Stomach (tissue), 19 donors: ENCODE measurements at regions of chr1 and their contacts with region 1.

Region 1: GRCh38 chr1:202132031-202132907 is 9.6 kb downstream of the GPR37L1 start:
- DNase-seq: peak; percentile 46 to 76
- H3K4me3 ChIP-seq: no peak overlapping the region
- H3K27ac ChIP-seq: peak overlapping the region; percentile 63 to 83 (median 76)
- H3K4me1 ChIP-seq: peaks cover 19 to 55% (median 33%) of the 10 kb centered on the region in 4 donors
- H3K27me3 ChIP-seq: no peaks in the 10 kb centered on the region
- CTCF ChIP-seq: no peak
- EP300 ChIP-seq: no peak
- POLR2A ChIP-seq: no peak

Region 2: GRCh38 chr1:202009326-202010179 is 122.7 kb before region 1 on chr1:
- intact Hi-C with region 1: loop called (anchors 5 kb)
- DNase-seq: peak; percentile 89 to 95
- H3K4me3 ChIP-seq: peak overlapping the region in 2 of 4 donors; percentile 22 to 32
- H3K27ac ChIP-seq: peak overlapping the region; percentile 86 to 95 (median 94)
- H3K4me1 ChIP-seq: peaks cover 11 to 36% (median 19%) of the 10 kb centered on the region in 4 donors
- H3K27me3 ChIP-seq: no peaks in the 10 kb centered on the region
- CTCF ChIP-seq: peak in 5 of 7 experiments; percentile 76 to 96 (median 87)
- EP300 ChIP-seq: no peak
- POLR2A ChIP-seq: no peak

Region 3: DNA sequence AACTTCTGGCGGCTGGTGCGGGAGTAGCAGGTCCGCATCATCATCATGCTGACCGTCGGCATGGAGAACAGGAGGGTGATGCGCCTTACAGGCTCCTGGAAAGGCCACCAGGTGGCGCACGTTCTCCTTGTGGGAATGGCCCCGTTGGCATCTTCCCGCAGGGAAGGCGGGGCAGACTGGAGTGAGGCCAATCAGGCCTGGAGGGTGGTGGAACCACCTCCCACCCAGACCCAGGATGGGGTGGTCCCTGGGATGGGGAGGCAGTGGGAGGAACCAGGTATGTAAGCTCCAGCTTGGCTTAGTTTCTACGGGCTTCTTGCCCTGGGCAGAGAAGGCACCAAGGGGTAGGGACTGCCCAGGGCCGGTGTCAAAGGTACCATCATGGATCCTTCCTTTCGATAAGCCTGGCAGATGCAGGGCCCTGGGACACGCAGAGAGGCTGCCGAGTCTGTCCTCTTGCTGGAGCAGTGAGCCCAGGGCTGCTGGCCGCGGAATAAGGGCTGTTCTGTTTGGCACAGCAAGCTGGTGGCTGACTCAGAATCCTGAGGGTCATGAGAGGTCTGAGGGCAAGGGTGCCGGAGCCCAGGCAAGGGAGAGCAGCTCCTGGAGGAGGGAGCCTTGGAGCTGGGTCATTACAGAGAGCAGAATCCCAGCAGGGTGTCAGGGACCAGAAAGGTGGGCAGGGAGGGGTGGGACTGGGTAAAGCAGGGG is 52.6 kb after region 1 on chr1:
- intact Hi-C with region 1: no loop called
- DNase-seq: peak; percentile 87 to 91
- H3K4me3 ChIP-seq: no peak overlapping the region
- H3K27ac ChIP-seq: no peak overlapping the region
- H3K4me1 ChIP-seq: peaks cover 0 to 9% (median 6%) of the 10 kb centered on the region in 4 donors
- H3K27me3 ChIP-seq: peaks cover 0 to 83% (median 0%) of the 10 kb centered on the region in 3 donors
- CTCF ChIP-seq: peak in 5 of 7 experiments; percentile 19 to 85 (median 71)
- EP300 ChIP-seq: no peak
- POLR2A ChIP-seq: no peak